HCT116 (cell line): ENCODE measurements at regions of chr19 and their contacts with region 1.

Region 1: DNA sequence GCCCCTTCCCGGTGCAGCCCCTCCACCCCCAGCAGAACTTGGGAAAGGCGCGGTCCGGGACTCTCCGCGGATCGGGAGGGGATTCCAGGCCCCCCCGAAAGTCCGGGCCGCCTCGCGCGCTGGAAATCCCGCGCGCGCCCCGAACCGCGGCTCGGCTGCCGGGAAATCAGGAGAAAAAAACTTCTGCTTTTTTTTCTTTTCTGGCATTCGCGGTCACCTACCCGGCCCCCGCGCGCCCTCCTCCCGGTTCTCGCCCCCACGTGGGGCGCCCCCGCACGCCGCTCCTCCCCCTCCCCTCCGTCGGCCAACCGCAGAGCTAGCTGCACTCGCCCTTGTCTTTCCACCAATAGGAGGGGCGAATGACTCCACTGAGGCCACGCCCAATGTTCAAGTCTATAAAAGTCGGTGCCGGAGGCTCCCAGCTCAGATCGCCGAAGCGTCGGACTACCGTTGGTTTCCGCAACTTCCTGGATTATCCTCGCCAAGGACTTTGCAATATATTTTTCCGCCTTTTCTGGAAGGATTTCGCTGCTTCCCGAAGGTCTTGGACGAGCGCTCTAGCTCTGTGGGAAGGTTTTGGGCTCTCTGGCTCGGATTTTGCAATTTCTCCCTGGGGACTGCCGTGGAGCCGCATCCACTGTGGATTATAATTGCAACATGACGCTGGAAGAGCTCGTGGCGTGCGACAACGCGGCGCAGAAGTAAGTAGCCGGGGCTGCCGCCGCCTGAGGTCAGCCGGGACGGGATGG is at the start of gene GADD45B:
- DNase-seq: peak; percentile 95
- ATAC-seq: peak; percentile 73
- H3K4me3 ChIP-seq: peak within 1 kb of the TSS; percentile 96 to 99
- H3K27ac ChIP-seq: peak within 1 kb of the TSS; percentile 78
- H3K4me1 ChIP-seq: peaks cover 18 to 45% of the 10 kb centered on the region in 2 experiments
- H3K27me3 ChIP-seq: no peaks in the 10 kb centered on the region
- CTCF ChIP-seq: no peak
- POLR2A ChIP-seq: peak; percentile 100
- RAD21 ChIP-seq: peak; percentile 54
- total RNA-seq, gene GADD45B: 37.9 TPM

Region 2: DNA sequence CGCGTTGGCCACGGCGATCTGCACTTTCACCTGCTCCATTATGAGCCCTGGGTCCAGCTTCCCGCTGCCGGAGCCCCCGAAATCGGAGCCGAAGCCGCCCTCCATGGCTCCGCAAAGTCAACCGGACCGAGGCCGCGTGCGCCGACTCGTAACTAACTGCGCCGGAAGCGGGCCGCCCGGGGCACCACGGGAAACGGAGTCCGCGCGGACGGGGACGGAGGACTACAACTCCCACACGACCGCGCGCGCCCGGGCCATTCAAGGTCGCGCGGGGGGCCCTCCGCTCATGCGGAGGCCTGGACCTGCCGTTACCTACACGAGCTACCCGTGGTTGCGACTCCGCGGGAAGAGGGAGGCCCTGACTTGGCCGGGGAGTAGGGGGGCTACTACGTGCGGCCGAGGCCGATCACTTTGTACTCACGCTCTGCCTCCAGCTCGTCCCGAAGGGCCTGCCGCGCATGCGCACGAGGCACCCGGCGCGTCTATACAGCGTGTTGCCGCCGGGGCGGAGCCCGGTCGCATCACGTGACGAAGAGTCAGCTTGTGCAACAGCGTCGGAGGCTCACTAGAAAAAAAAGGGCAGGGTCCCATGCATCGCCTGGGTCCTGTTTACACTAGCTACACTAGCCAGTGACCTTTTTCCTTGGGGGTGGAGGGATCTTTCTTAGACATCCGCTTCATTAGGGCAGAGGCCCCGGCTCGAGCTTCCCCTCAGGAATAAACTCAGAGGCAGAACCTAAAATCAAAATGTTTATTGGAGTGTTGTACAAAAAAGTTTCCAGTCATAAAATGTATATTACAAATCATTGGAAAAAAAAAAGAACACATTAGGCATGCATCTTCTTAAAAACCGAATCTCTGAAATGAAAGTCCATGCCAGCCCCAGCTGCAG is 48.2 kb before region 1 on chr19 and contains the start of gene TIMM13:
- CTCF ChIA-PET with region 1: no interaction called
- POLR2A ChIA-PET with region 1: interaction called, 13 read pairs
- RAD21 ChIA-PET with region 1: no interaction called
- intact Hi-C with region 1: no loop called
- DNase-seq: peak; percentile 88
- ATAC-seq: peak; percentile 85
- H3K4me3 ChIP-seq: peak within 1 kb of the TSS; percentile 90 to 97
- H3K27ac ChIP-seq: peak within 1 kb of the TSS; percentile 88
- H3K4me1 ChIP-seq: peaks cover 6 to 25% of the 10 kb centered on the region in 2 experiments; a peak in 3 of 4 replicates
- H3K27me3 ChIP-seq: no peaks in the 10 kb centered on the region
- CTCF ChIP-seq: no peak
- POLR2A ChIP-seq: no peak
- RAD21 ChIP-seq: no peak
- total RNA-seq, gene TIMM13: 151 TPM

Region 3: DNA sequence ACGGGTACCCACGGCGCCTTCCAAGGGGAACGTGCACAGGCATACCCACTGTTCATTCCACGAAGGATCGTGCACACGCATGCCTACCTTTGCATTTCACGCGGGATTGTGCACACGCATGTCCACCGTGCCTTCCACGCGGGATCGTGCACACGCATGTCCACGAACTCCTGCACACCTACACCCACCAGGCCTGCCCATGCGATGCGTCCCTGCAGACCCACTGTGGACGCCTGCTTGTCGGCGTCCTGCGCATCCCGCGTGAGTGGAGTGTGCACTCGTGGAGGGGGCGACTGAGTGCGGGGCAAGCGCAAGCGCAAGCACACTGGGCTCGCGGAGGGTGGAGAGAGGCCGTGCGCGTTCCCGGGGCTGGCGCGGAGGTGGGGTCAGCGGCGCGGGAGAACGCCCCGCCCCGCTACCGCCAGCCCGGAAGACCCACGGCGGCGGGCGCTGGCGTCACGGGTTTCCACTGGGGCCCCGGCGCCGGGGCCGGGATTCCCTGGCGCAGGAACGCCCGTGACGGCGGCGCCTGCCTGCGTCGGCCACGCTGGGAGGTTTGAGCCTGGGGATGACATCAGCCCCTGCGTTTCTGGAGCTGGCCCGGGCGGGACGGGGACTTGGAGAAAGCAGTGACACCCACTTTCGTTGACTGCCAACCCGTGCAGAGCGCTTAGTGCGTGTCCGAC is 18.7 kb after region 1 on chr19:
- CTCF ChIA-PET with region 1: interaction called, 3 read pairs
- POLR2A ChIA-PET with region 1: interaction called, 46 read pairs
- RAD21 ChIA-PET with region 1: no interaction called
- intact Hi-C with region 1: no loop called
- DNase-seq: no peak
- ATAC-seq: peak; percentile 69
- H3K4me3 ChIP-seq: peak overlapping the region; percentile 54 to 66
- H3K27ac ChIP-seq: peak overlapping the region; percentile 69
- H3K4me1 ChIP-seq: peaks cover 37 to 72% of the 10 kb centered on the region in 2 experiments
- H3K27me3 ChIP-seq: no peaks in the 10 kb centered on the region
- CTCF ChIP-seq: no peak
- POLR2A ChIP-seq: no peak
- RAD21 ChIP-seq: no peak

Region 4: GRCh38 chr19:2519482-2519881 is 43.6 kb after region 1 on chr19:
- CTCF ChIA-PET with region 1: no interaction called
- POLR2A ChIA-PET with region 1: interaction called, 21 read pairs
- RAD21 ChIA-PET with region 1: interaction called, 5 to 6 read pairs
- intact Hi-C with region 1: no loop called
- DNase-seq: no peak
- ATAC-seq: no peak
- H3K4me3 ChIP-seq: no peak overlapping the region
- H3K27ac ChIP-seq: no peak overlapping the region
- H3K4me1 ChIP-seq: peaks cover 41 to 61% of the 10 kb centered on the region in 2 experiments
- H3K27me3 ChIP-seq: no peaks in the 10 kb centered on the region
- CTCF ChIP-seq: no peak
- POLR2A ChIP-seq: no peak
- RAD21 ChIP-seq: no peak

Region 5: DNA sequence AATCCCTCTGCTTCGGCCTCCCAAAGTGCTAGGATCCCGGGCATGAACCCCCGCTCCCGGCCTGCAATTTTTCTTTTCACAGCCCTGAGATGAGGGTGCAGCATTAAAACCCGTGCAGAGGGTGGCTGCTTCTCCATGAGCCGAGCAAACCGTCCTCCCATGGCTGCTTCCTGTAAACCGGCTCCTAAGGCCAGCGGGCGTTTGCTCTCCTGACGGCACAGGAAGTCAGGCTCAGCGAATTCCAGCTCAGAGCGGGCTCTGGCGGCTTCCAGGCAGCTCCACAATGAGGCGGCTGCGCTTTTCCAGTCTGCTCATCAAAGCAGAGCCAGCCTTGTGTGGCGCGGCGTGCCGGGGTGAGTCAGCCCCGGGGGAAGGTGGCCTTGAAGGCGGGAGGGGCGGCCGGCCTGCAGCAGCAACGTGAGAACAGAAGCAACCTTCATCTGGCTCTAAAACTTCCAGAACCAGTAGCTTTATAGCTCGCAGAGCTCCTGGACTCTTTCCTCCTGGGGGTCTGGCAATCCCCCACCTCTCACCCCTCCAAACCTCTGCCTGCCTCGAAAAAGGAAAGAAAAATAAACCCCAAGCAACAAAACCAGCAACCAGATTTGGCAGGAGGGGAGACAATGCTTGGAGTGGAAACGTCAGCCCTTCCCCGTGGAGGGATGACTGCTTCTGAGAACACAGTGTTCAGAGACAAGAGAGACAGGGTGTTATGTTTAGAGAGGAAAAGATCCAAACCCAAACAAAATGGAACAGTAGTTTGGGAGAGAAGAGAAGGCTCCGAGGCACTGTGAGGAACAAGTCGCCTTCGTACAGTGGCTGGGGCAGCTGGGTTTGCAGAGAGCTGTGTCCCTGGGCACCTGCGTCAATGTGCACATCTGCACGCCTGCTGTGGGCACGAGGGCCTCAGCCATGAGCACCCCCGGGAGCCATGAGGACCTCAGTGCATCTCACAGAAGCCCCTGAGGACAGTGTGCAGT is 67.9 kb after region 1 on chr19:
- CTCF ChIA-PET with region 1: interaction called, 3 read pairs
- POLR2A ChIA-PET with region 1: interaction called, 55 read pairs
- RAD21 ChIA-PET with region 1: interaction called, 5 to 9 read pairs
- intact Hi-C with region 1: no loop called
- DNase-seq: peak; percentile 91
- ATAC-seq: peak; percentile 82
- H3K4me3 ChIP-seq: peak overlapping the region; percentile 16 to 20; a peak in 2 of 4 replicates
- H3K27ac ChIP-seq: peak overlapping the region; percentile 80
- H3K4me1 ChIP-seq: peaks cover 51 to 77% of the 10 kb centered on the region in 2 experiments
- H3K27me3 ChIP-seq: no peaks in the 10 kb centered on the region
- CTCF ChIP-seq: peak in 1 of 3 experiments; percentile 25; a peak in 2 of 6 replicates
- POLR2A ChIP-seq: no peak
- RAD21 ChIP-seq: peak; percentile 63

Region 6: GRCh38 chr19:2602391-2603181 is 126.7 kb after region 1 on chr19:
- CTCF ChIA-PET with region 1: interaction called, 3 read pairs
- POLR2A ChIA-PET with region 1: interaction called, 67 read pairs
- RAD21 ChIA-PET with region 1: interaction called in 1 of 2 experiments, 3 read pairs
- intact Hi-C with region 1: no loop called
- DNase-seq: no peak
- ATAC-seq: no peak
- H3K4me3 ChIP-seq: no peak overlapping the region
- H3K27ac ChIP-seq: no peak overlapping the region
- H3K4me1 ChIP-seq: peaks cover 14 to 17% of the 10 kb centered on the region in 2 experiments
- H3K27me3 ChIP-seq: no peaks in the 10 kb centered on the region
- CTCF ChIP-seq: no peak
- POLR2A ChIP-seq: no peak
- RAD21 ChIP-seq: no peak

Region 7: DNA sequence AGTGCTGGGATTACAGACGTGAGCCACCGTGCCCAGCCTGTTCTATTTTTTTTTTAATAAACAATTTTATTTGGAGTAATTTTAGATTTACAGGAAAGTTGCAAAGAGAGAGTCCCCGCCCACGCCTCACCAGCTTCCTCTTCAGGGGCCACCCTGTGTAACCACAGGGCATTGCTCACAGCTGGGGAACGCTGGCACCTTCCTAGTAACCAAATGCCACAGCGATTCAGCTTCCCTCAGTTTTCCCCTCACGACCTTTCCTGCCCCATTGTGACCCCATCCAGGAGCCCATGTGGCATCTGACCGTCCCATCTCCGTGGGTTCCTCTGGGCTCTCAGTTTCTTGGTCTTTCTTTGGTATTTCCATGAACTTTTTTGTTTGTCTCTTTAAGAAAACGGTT is 142.7 kb after region 1 on chr19:
- CTCF ChIA-PET with region 1: interaction called, 8 read pairs
- POLR2A ChIA-PET with region 1: interaction called, 22 read pairs
- RAD21 ChIA-PET with region 1: interaction called in 1 of 2 experiments, 3 read pairs
- intact Hi-C with region 1: no loop called
- DNase-seq: peak; percentile 62
- ATAC-seq: peak; percentile 74
- H3K4me3 ChIP-seq: peak overlapping the region in 1 of 2 experiments; percentile 16; a peak in 1 of 4 replicates
- H3K27ac ChIP-seq: peak overlapping the region; percentile 20
- H3K4me1 ChIP-seq: peaks cover 38 to 50% of the 10 kb centered on the region in 2 experiments
- H3K27me3 ChIP-seq: no peaks in the 10 kb centered on the region
- CTCF ChIP-seq: no peak
- POLR2A ChIP-seq: no peak
- RAD21 ChIP-seq: no peak